Esophagus muscularis mucosa (tissue), 4 donors: ENCODE measurements at regions of chr20 and their contacts with region 1.

Region 1: DNA sequence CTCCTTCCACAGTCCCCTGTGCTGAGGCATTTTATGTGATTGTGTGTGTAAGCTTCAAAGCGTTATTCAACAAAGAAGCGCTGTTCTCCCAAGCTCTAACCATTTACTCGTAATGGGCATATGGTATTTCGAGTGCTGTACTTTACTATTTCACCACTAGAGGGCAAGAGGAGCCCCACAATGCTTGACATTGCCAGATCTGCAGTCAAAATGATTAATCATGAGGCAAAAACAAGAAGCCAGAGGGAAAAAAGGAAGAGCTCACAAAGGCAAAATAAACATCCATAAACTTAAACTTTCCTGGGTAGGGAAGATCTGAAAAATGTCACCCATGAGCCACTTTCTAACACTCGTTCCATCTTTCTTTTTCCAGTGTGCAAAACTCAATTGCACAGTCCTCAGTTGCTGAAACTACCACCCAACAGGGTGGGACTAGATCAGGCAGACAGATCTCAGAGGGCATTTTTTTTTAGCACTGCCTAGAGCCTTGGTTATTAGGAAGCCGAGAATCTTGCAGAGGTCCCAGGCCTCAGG is 215.0 kb upstream of the PLCB4 start:
- DNase-seq: no peak
- H3K4me3 ChIP-seq: peak overlapping the region; percentile 4 to 29 (median 20)
- H3K27ac ChIP-seq: peak overlapping the region; percentile 70 to 78 (median 74)
- H3K4me1 ChIP-seq: peaks cover 11 to 82% (median 60%) of the 10 kb centered on the region in 4 donors
- H3K27me3 ChIP-seq: no peaks in the 10 kb centered on the region
- CTCF ChIP-seq: peak; percentile 83 to 92 (median 89)
- EP300 ChIP-seq: no peak
- POLR2A ChIP-seq: no peak

Region 2: DNA sequence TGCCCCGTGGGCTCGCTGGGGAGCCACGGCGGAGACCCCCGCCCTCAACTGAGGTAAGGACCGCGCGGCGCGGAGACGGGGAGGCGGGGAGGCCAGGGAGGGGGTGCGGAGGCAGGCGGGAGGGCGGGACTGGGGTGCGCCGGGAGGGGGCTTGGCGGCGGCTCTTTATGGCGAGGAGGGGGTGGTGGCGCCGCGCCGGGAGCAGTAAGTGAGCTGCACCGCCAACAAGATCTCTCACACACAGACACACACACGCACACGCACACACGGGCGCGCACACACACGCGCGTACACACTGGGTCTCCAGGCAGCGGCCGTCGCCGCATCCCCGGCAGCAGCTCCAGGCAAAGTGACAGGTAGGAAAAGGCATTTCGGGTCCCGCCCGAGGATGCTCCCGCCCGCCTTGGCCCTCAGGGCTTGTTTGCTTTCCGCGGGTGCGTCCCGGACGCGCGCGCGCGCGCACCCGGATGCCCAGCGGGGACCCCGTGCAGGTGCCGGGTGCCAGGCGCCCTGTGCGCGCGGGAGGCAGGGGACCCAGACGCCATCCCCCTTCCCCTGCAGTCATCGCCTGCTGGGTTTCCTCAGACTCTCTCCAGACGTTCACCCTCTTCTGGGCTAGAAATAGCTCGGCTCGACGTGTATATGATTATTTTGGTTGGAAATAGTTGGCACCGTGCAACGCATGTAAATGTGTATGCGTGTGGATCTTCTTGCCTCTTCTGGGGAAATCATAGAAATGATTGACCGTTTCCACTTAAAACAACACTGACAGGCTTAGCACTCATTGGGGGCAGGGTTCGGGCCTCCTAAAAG is 215.2 kb after region 1 on chr20 and contains the start of gene PLCB4:
- intact Hi-C with region 1: loop called (anchors 5 kb)
- DNase-seq: no peak
- H3K4me3 ChIP-seq: peak within 1 kb of the TSS; percentile 82 to 93 (median 88)
- H3K27ac ChIP-seq: peak within 1 kb of the TSS; percentile 86 to 92 (median 89)
- H3K4me1 ChIP-seq: peaks cover 17 to 43% (median 42%) of the 10 kb centered on the region in 4 donors
- H3K27me3 ChIP-seq: no peaks in the 10 kb centered on the region
- CTCF ChIP-seq: no peak
- EP300 ChIP-seq: no peak
- POLR2A ChIP-seq: no peak
- total RNA-seq, gene PLCB4: 30.7 to 61.8 (median 47.6) TPM

Region 3: DNA sequence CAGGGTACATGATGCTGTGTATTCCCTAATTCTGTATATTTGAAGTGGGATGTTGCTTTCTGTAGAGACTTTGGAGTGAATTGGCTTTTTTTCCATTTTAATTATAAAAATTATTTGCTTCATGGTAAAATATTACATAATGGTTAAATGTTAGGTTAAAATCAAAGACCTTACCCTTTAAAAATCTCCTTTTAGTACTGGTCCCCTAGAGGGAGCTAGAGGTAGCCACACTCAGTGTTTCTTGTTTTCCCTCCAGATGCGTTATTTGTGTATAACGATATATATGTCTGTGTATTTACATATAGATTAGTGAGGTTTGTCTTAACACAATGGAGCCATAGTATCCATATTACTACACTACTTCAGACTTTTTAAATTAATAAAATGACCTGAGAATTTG is 361.7 kb after region 1 on chr20:
- intact Hi-C with region 1: loop called (anchors 5 kb)
- DNase-seq: no peak
- H3K4me3 ChIP-seq: no peak overlapping the region
- H3K27ac ChIP-seq: peak overlapping the region; percentile 2 to 62 (median 49)
- H3K4me1 ChIP-seq: peaks cover 19 to 66% (median 42%) of the 10 kb centered on the region in 4 donors
- H3K27me3 ChIP-seq: no peaks in the 10 kb centered on the region
- CTCF ChIP-seq: peak in 2 of 3 experiments; percentile 34 to 37
- EP300 ChIP-seq: no peak
- POLR2A ChIP-seq: no peak

Region 4: GRCh38 chr20:9359561-9360308 is 505.9 kb after region 1 on chr20:
- intact Hi-C with region 1: loop called (anchors 5 kb)
- DNase-seq: no peak
- H3K4me3 ChIP-seq: no peak overlapping the region
- H3K27ac ChIP-seq: peak overlapping the region in 1 of 4 donors; percentile 37
- H3K4me1 ChIP-seq: peaks cover 8 to 37% (median 29%) of the 10 kb centered on the region in 4 donors
- H3K27me3 ChIP-seq: no peaks in the 10 kb centered on the region
- CTCF ChIP-seq: peak; percentile 50 to 54 (median 53)
- EP300 ChIP-seq: no peak
- POLR2A ChIP-seq: no peak

Region 5: GRCh38 chr20:9392892-9393857 is 539.3 kb after region 1 on chr20:
- intact Hi-C with region 1: loop called (anchors 10 kb)
- DNase-seq: no peak
- H3K4me3 ChIP-seq: no peak overlapping the region
- H3K27ac ChIP-seq: no peak overlapping the region
- H3K4me1 ChIP-seq: peaks cover 0 to 35% (median 28%) of the 10 kb centered on the region in 4 donors
- H3K27me3 ChIP-seq: no peaks in the 10 kb centered on the region
- CTCF ChIP-seq: peak; percentile 71 to 86 (median 78)
- EP300 ChIP-seq: no peak
- POLR2A ChIP-seq: no peak